CD8-positive, alpha-beta T cell (primary cell): ENCODE measurements at regions of chr9 and their contacts with region 1.

Region 1: GRCh38 chr9:137129456-137130175 is 9.3 kb upstream of the GRIN1 start:
- DNase-seq: peak; percentile 71 to 96 (median 88)
- ATAC-seq: peak; percentile 92
- H3K4me3 ChIP-seq: peak overlapping the region; percentile 70 to 83
- H3K4me3 Mint-ChIP-seq: peak overlapping the region; percentile 87
- H3K27ac ChIP-seq: peak overlapping the region; percentile 62 to 78
- H3K27ac Mint-ChIP-seq: peak overlapping the region; percentile 91
- H3K4me1 ChIP-seq: peaks cover 35% of the 10 kb centered on the region
- H3K4me1 Mint-ChIP-seq: peaks cover 28% of the 10 kb centered on the region
- H3K27me3 ChIP-seq: peaks cover 0 to 17% of the 10 kb centered on the region in 2 experiments
- H3K27me3 Mint-ChIP-seq: peaks cover 9% of the 10 kb centered on the region
- CTCF ChIP-seq: no peak

Region 2: GRCh38 chr9:137114610-137115391 is 14.8 kb before region 1 on chr9 and contains the start of gene DPP7:
- CTCF ChIA-PET with region 1: no interaction called
- POLR2A ChIA-PET with region 1: interaction called, 3 read pairs
- intact Hi-C with region 1: loop called (anchors 1 kb)
- DNase-seq: peak; percentile 50 to 90 (median 78)
- ATAC-seq: peak; percentile 90
- H3K4me3 ChIP-seq: peak within 1 kb of the TSS; percentile 43 to 58
- H3K4me3 Mint-ChIP-seq: peak within 1 kb of the TSS; percentile 69
- H3K27ac ChIP-seq: peak within 1 kb of the TSS in 1 of 2 experiments; percentile 30
- H3K27ac Mint-ChIP-seq: peak within 1 kb of the TSS; percentile 70
- H3K4me1 ChIP-seq: peaks cover 14% of the 10 kb centered on the region
- H3K4me1 Mint-ChIP-seq: peaks cover 7% of the 10 kb centered on the region
- H3K27me3 ChIP-seq: no peaks in the 10 kb centered on the region
- H3K27me3 Mint-ChIP-seq: no peaks in the 10 kb centered on the region
- CTCF ChIP-seq: no peak
- total RNA-seq, gene DPP7: 311 to 325 TPM

Region 3: GRCh38 chr9:137188490-137189296 is 59.1 kb after region 1 on chr9 and contains the starts of genes ANAPC2 and SSNA1:
- CTCF ChIA-PET with region 1: interaction called, 5 read pairs
- POLR2A ChIA-PET with region 1: interaction called, 11 read pairs
- intact Hi-C with region 1: loop called (anchors 1 kb)
- DNase-seq: peak; percentile 84 to 98 (median 94)
- ATAC-seq: peak; percentile 80
- H3K4me3 ChIP-seq: peak within 1 kb of the TSS; percentile 92 to 100
- H3K4me3 Mint-ChIP-seq: peak within 1 kb of the TSS; percentile 93
- H3K27ac ChIP-seq: peak within 1 kb of the TSS; percentile 95 to 96
- H3K27ac Mint-ChIP-seq: peak within 1 kb of the TSS; percentile 96
- H3K4me1 ChIP-seq: peaks cover 34% of the 10 kb centered on the region
- H3K4me1 Mint-ChIP-seq: peaks cover 41% of the 10 kb centered on the region
- H3K27me3 ChIP-seq: no peaks in the 10 kb centered on the region
- H3K27me3 Mint-ChIP-seq: no peaks in the 10 kb centered on the region
- CTCF ChIP-seq: peak; percentile 56
- total RNA-seq, gene ANAPC2: 166 to 171 TPM
- total RNA-seq, gene SSNA1: 28.8 to 29.6 TPM

Region 4: DNA sequence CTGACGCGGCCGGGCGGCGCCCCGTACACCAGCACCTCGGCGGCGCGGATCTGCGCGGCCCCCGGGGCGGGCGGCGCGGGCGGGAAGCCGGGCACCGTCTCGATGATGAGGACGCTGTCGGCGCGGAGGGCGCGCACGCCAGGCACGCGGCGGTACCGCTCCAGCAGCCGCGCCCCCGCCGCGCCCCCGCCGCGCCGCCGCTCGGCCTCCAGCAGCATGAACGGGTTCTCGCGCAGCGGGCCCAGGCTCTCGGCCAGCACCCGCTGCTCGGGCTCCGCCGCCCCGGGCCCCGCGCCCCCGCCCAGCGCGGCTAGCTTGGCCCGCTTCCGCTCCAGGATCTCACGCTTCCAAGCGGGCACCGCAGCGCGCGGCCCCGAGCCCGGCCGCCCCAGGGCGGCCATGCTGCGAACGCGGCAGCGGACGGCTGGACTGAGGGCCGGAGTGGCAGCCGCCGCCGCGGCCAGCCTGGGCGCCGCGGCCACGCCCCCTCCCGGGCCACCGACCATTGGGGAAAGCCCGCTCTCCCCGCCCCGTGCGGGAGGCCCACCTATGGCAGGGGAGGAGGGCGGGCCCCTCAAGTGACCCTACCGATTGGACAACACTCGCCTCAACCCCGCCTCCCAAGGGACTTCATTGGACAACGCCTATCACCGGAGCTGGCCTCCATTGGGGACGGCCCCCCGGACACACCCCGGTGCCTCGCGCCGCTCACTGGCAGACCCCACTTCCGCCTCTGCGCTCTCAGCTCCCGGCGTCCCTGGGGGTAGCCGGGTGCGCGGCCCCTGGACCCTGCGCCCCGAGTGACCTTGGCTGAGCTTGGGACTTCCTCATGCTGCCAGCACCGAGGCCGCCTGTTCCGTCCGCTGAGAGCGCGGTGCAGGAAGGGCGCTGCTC is 70.9 kb after region 1 on chr9 and contains the start of gene TPRN:
- CTCF ChIA-PET with region 1: no interaction called
- POLR2A ChIA-PET with region 1: interaction called, 5 read pairs
- intact Hi-C with region 1: loop called in 1 of 2 experiments (anchors 2 kb)
- DNase-seq: peak; percentile 96 to 99 (median 98)
- ATAC-seq: peak; percentile 96
- H3K4me3 ChIP-seq: peak within 1 kb of the TSS; percentile 64 to 88
- H3K4me3 Mint-ChIP-seq: peak within 1 kb of the TSS; percentile 83
- H3K27ac ChIP-seq: peak within 1 kb of the TSS; percentile 65 to 82
- H3K27ac Mint-ChIP-seq: peak within 1 kb of the TSS; percentile 57
- H3K4me1 ChIP-seq: peaks cover 22% of the 10 kb centered on the region
- H3K4me1 Mint-ChIP-seq: peaks cover 27% of the 10 kb centered on the region
- H3K27me3 ChIP-seq: no peaks in the 10 kb centered on the region
- H3K27me3 Mint-ChIP-seq: no peaks in the 10 kb centered on the region
- CTCF ChIP-seq: no peak
- total RNA-seq, gene TPRN: 4.1 to 4.4 TPM

Region 5: GRCh38 chr9:137254624-137255447 is 125.2 kb after region 1 on chr9 and contains the start of gene NELFB:
- CTCF ChIA-PET with region 1: no interaction called
- POLR2A ChIA-PET with region 1: interaction called, 8 read pairs
- intact Hi-C with region 1: loop called in 1 of 2 experiments (anchors 1 kb)
- DNase-seq: peak; percentile 91 to 99 (median 95)
- ATAC-seq: peak; percentile 92
- H3K4me3 ChIP-seq: peak within 1 kb of the TSS; percentile 81 to 83
- H3K4me3 Mint-ChIP-seq: peak within 1 kb of the TSS; percentile 88
- H3K27ac ChIP-seq: peak within 1 kb of the TSS; percentile 12 to 38
- H3K27ac Mint-ChIP-seq: peak within 1 kb of the TSS; percentile 73
- H3K4me1 ChIP-seq: peaks cover 18% of the 10 kb centered on the region
- H3K4me1 Mint-ChIP-seq: peaks cover 15% of the 10 kb centered on the region
- H3K27me3 ChIP-seq: no peaks in the 10 kb centered on the region
- H3K27me3 Mint-ChIP-seq: no peaks in the 10 kb centered on the region
- CTCF ChIP-seq: no peak
- total RNA-seq, gene NELFB: 17.1 to 17.6 TPM